ENCODE measurements at regions of chr5 and their contacts with region 1.

Region 1: GRCh38 chr5:157820593-157821252 is 38.2 kb downstream of the CLINT1 start:
- DNase-seq: peak; percentile 14
- H3K4me3 ChIP-seq: no peak overlapping the region
- H3K27ac ChIP-seq: no peak overlapping the region
- H3K4me1 ChIP-seq: no peaks in the 10 kb centered on the region
- H3K27me3 ChIP-seq: no peaks in the 10 kb centered on the region
- CTCF ChIP-seq: peak; percentile 47 to 53

Region 2: GRCh38 chr5:157778121-157778805 is 42.5 kb before region 1 on chr5:
- CTCF ChIA-PET with region 1: no interaction called
- dilution Hi-C with region 1: no loop called
- in situ Hi-C with region 1: no loop called
- intact Hi-C with region 1: no loop called
- DNase-seq: peak; percentile 78
- H3K4me3 ChIP-seq: no peak overlapping the region
- H3K27ac ChIP-seq: no peak overlapping the region
- H3K4me1 ChIP-seq: no peaks in the 10 kb centered on the region
- H3K27me3 ChIP-seq: peaks cover 5% of the 10 kb centered on the region
- CTCF ChIP-seq: no peak

Region 3: DNA sequence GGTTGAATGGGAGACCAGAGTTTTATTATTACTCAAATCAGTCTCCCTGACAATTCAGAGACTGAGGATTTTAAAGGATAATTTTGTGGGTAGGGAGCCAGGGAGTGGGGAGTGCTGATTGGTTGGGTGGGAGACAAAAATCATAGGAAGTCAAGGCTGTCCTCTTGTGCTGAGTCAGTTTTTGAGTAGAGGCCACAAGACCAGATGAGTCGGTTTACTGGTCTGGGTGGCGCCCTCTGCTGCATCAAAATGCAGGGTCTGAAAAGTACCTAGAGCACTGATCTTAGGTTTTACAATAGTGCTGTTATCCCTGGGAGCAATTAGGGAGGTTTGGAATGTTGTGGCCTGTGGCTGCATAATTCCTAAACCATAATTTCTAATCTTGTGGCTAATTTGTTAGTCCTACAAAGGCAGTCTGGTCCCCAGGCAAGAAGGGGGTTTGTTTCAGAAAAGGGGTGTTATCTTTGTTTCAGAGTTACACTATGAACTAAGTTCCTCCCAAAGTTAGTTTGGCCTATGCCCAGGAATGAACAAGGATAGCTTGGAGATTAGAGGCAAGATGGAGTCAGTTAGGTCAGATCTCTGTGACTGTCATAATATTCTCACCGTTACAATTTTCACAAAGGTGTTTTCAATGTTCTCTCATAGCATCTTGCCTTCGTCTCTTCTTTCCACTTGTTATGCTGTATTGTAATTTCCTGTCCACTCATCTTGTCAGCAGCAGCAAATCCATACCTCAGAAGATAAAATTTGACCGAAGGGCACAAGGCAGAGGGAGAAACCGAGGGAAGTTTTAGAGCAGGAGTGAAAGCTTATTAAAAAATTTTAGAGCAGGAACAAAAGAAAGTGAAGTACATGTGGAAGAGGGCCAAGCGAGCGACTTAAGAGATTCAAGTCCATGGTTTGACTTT is 97.4 kb after region 1 on chr5:
- CTCF ChIA-PET with region 1: no interaction called
- dilution Hi-C with region 1: no loop called
- in situ Hi-C with region 1: loop called in 1 of 2 experiments (anchors 25 kb)
- intact Hi-C with region 1: loop called (anchors 1 kb)
- DNase-seq: peak; percentile 73
- H3K4me3 ChIP-seq: no peak overlapping the region
- H3K27ac ChIP-seq: no peak overlapping the region
- H3K4me1 ChIP-seq: no peaks in the 10 kb centered on the region
- H3K27me3 ChIP-seq: no peaks in the 10 kb centered on the region
- CTCF ChIP-seq: peak; percentile 57 to 77

Region 4: GRCh38 chr5:157948738-157949410 is 128.2 kb after region 1 on chr5:
- CTCF ChIA-PET with region 1: no interaction called
- dilution Hi-C with region 1: no loop called
- in situ Hi-C with region 1: no loop called
- intact Hi-C with region 1: loop called (anchors 2 kb)
- DNase-seq: peak; percentile 89
- H3K4me3 ChIP-seq: no peak overlapping the region
- H3K27ac ChIP-seq: no peak overlapping the region
- H3K4me1 ChIP-seq: no peaks in the 10 kb centered on the region
- H3K27me3 ChIP-seq: no peaks in the 10 kb centered on the region
- CTCF ChIP-seq: peak; percentile 82 to 93

Region 5: DNA sequence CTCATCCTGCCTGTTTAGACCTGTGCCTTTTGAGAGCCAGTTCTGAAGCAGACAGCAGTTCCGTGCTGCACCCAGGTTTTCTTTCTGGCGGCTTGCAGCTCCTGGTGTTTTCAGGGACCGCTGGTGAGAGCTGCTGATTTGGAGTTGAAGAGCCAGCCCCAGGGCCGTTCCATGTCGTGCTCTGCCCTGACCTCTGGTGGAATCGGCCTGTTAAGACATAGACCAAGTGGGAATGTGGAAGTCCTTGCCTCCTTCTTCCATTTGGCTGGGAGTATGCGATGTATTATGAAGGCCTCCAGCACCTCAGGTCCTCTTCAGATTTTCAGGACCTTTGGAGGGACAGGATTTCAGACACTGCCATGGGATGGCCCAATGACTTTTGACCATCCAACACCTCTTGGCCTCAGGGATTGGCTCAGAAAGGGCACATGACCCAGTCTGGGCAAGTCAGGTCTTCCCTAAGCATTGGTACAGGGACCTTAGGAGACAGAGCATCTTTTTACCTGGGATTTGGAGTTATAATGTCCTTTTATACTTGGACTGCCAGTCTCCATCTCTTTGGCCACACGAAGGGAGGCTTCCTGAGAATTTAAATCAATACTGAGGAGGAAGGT is 174.3 kb after region 1 on chr5:
- CTCF ChIA-PET with region 1: interaction called, 3 read pairs
- dilution Hi-C with region 1: no loop called
- in situ Hi-C with region 1: no loop called
- intact Hi-C with region 1: loop called (anchors 1 kb)
- DNase-seq: peak; percentile 67
- H3K4me3 ChIP-seq: no peak overlapping the region
- H3K27ac ChIP-seq: no peak overlapping the region
- H3K4me1 ChIP-seq: no peaks in the 10 kb centered on the region
- H3K27me3 ChIP-seq: no peaks in the 10 kb centered on the region
- CTCF ChIP-seq: peak; percentile 69 to 90

Region 6: GRCh38 chr5:159133041-159133741 is 1312.5 kb after region 1 on chr5:
- CTCF ChIA-PET with region 1: no interaction called
- dilution Hi-C with region 1: no loop called
- in situ Hi-C with region 1: no loop called
- intact Hi-C with region 1: loop called (anchors 2 kb)
- DNase-seq: peak; percentile 38
- H3K4me3 ChIP-seq: no peak overlapping the region
- H3K27ac ChIP-seq: no peak overlapping the region
- H3K4me1 ChIP-seq: no peaks in the 10 kb centered on the region
- H3K27me3 ChIP-seq: no peaks in the 10 kb centered on the region
- CTCF ChIP-seq: peak; percentile 62 to 69